Naive thymus-derived CD4-positive, alpha-beta T cell (primary cell): ENCODE measurements at regions of chr2 and their contacts with region 1.

Region 1: DNA sequence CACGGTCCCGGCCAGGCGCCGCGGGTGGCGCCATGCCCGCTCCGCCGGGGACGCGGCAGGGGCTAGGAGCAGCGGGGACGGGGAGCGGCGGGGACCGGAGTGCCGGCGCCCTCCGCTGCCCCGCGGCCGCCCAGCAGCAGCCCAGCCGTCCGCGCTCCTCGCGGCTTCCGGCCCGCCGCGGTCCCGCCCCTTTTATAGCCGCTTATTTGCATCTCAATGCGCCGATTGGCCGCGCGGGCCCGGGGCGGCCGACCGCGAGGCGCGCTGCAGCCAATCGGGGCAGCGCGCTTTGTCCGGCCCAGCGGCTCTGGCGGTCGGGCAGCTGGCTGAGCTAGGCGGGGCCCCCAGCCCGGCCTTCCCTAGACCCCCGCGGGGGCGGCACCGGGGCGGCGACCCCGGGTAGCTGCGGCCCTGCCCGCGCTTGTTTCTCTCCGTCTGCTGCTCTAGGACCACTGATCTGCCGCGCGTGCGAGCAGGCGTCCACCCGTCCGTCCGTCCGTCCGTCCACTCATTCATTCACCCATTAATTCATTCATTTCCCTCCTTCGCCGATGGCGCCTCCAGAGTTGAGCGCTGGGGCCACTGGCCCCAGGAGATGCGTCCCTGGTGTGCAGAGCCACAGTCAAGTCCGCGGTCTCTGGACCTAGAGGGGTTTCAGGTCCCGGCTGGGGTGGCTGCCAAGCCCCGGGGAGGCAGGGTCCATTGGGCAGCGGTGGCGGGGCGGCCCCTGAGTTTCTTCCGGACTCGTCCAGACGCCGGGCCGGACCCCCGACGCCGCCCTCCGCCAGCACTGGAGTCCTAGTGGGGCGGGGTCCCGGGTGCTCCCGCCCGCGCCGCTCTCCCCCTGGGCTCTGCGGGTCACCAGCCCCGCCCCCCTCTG is at the start of gene HES6:
- DNase-seq: peak; percentile 50 to 84 (median 61)
- ATAC-seq: peak; percentile 90
- H3K4me3 ChIP-seq: peak within 1 kb of the TSS; percentile 59
- H3K4me3 Mint-ChIP-seq: peak within 1 kb of the TSS; percentile 88 to 98 (median 94)
- H3K27ac ChIP-seq: no peak within 1 kb of the TSS
- H3K27ac Mint-ChIP-seq: peak within 1 kb of the TSS in 6 of 9 donors; percentile 28 to 86 (median 80)
- H3K4me1 ChIP-seq: peaks cover 0 to 4% of the 10 kb centered on the region in 2 donors
- H3K4me1 Mint-ChIP-seq: peaks cover 2 to 17% (median 8%) of the 10 kb centered on the region in 7 donors
- H3K27me3 ChIP-seq: peaks cover 0 to 16% of the 10 kb centered on the region in 2 donors
- H3K27me3 Mint-ChIP-seq: peaks cover 11 to 49% (median 13%) of the 10 kb centered on the region in 5 donors
- total RNA-seq, gene HES6: 0.73 to 2.7 (median 2.4) TPM

Region 2: DNA sequence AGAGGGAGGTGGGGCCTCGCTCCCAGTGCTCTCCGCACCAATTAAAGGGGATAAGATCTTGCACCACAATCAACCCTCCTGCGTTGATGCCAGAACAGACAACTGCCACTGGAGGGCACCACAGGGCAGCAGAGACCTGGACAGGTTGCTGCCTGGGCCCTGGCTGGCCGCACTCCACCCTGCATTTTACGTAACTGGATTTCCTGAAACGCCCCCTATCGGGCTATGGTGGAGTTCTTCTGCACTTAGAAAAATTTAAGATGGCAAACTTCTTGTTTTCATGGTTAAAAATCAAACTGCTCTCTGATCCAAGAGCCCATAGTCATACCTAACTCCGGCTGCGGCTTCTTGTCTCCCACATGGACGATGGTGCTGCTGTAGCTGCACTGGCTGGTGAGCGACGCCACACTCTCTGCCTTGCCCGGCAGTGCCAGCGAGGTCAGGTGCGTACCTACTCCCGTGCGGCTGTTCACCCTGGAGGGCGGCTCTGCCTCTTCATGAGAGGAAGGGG is 16.5 kb after region 1 on chr2:
- CTCF ChIA-PET with region 1: no interaction called
- POLR2A ChIA-PET with region 1: no interaction called
- intact Hi-C with region 1: loop called in 1 of 2 experiments (anchors 2 kb)
- DNase-seq: peak; percentile 38 to 78 (median 66)
- ATAC-seq: peak; percentile 95
- H3K4me3 ChIP-seq: no peak overlapping the region
- H3K4me3 Mint-ChIP-seq: no peak overlapping the region
- H3K27ac ChIP-seq: no peak overlapping the region
- H3K27ac Mint-ChIP-seq: peak overlapping the region in 3 of 9 donors; percentile 19 to 88 (median 28)
- H3K4me1 ChIP-seq: no peaks in the 10 kb centered on the region
- H3K4me1 Mint-ChIP-seq: peaks cover 0 to 14% (median 0%) of the 10 kb centered on the region in 7 donors
- H3K27me3 ChIP-seq: no peaks in the 10 kb centered on the region
- H3K27me3 Mint-ChIP-seq: no peaks in the 10 kb centered on the region